Naive thymus-derived CD8-positive, alpha-beta T cell (primary cell): ENCODE measurements at regions of chr17 and their contacts with region 1.

Region 1: DNA sequence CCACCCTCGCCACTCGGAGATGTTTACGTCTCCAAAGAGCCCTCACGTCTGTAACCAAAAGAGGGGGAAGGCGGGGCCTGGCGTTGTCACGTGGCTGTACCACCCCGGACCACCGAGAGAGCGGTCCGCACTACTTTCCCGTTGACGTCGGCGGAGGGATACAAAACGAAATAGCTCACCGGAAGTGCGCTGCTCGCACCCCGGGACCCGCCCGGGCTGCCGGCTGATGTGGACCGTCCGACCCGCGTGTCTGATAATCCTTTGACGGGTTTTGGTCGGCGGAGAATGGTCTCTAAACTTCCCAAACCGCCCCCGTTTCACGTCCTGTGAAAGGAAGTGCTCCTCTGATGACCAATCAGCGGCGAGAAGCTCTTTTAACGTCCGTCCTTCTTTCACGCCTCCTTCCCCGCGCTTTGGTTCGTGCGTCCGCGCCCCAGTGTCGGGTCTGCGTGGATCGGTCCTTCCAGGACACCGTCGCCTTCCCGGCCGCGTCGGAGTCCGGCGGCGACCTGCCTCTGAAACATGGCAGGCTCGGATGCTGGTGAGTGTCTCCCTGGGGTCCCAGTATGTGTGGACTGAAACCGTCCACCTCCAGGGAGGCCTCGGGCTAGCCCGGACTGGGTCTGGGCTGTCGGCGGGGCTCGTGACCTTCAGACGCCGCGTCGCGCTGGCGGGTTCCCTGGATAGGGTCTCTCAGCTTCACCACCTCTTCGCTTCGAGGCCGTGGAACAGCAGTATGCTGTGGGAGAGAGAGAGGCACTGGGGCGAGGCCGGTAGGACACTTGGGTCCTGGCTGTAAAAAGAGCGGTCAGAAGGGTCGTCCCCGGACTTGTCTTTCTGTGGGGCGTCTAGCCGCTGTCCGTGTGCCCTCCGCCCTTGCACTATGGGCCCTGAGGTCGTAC is at the start of gene CEP95:
- DNase-seq: peak; percentile 88 to 99 (median 96)
- ATAC-seq: peak; percentile 60 to 70
- H3K4me3 Mint-ChIP-seq: peak within 1 kb of the TSS; percentile 98 to 100 (median 100)
- H3K27ac Mint-ChIP-seq: peak within 1 kb of the TSS; percentile 99 to 100 (median 100)
- H3K4me1 Mint-ChIP-seq: peaks cover 30 to 81% (median 57%) of the 10 kb centered on the region in 4 donors
- H3K27me3 Mint-ChIP-seq: peaks cover 0 to 6% (median 0%) of the 10 kb centered on the region in 5 donors
- polyA plus RNA-seq, gene CEP95: 8.6 to 20.1 (median 9.0) TPM

Region 2: GRCh38 chr17:63773381-63774140 is 733.3 kb before region 1 on chr17 and contains the start of gene CCDC47:
- POLR2A ChIA-PET with region 1: interaction called, 16 read pairs
- DNase-seq: peak; percentile 94 to 99 (median 98)
- ATAC-seq: peak; percentile 86 to 88
- H3K4me3 Mint-ChIP-seq: peak within 1 kb of the TSS; percentile 87 to 99 (median 96)
- H3K27ac Mint-ChIP-seq: peak within 1 kb of the TSS; percentile 91 to 100 (median 99)
- H3K4me1 Mint-ChIP-seq: peaks cover 30 to 80% (median 70%) of the 10 kb centered on the region in 4 donors
- H3K27me3 Mint-ChIP-seq: no peaks in the 10 kb centered on the region
- polyA plus RNA-seq, gene CCDC47: 21.8 to 34.8 (median 26.0) TPM

Region 3: GRCh38 chr17:64355536-64356303 is 151.1 kb before region 1 on chr17:
- POLR2A ChIA-PET with region 1: no interaction called
- DNase-seq: no peak
- ATAC-seq: no peak
- H3K4me3 Mint-ChIP-seq: peak overlapping the region in 2 of 10 donors; percentile 9 to 15
- H3K27ac Mint-ChIP-seq: peak overlapping the region; percentile 70 to 94 (median 87)
- H3K4me1 Mint-ChIP-seq: peaks cover 18 to 40% (median 28%) of the 10 kb centered on the region in 4 donors
- H3K27me3 Mint-ChIP-seq: no peaks in the 10 kb centered on the region

Region 4: GRCh38 chr17:64388961-64389565 is 117.8 kb before region 1 on chr17:
- POLR2A ChIA-PET with region 1: interaction called, 115 read pairs
- DNase-seq: peak in 3 of 10 donors; percentile 24 to 61 (median 52)
- ATAC-seq: peak; percentile 30 to 32
- H3K4me3 Mint-ChIP-seq: peak overlapping the region; percentile 9 to 84 (median 74)
- H3K27ac Mint-ChIP-seq: peak overlapping the region; percentile 66 to 100 (median 96)
- H3K4me1 Mint-ChIP-seq: peaks cover 53 to 95% (median 93%) of the 10 kb centered on the region in 4 donors
- H3K27me3 Mint-ChIP-seq: no peaks in the 10 kb centered on the region

Region 5: GRCh38 chr17:64411999-64412771 is 94.6 kb before region 1 on chr17:
- POLR2A ChIA-PET with region 1: interaction called, 59 read pairs
- DNase-seq: peak in 2 of 10 donors; percentile 31 to 68
- ATAC-seq: peak; percentile 54 to 76
- H3K4me3 Mint-ChIP-seq: peak overlapping the region; percentile 63 to 88 (median 80)
- H3K27ac Mint-ChIP-seq: peak overlapping the region; percentile 53 to 91 (median 76)
- H3K4me1 Mint-ChIP-seq: peaks cover 21 to 40% (median 32%) of the 10 kb centered on the region in 4 donors
- H3K27me3 Mint-ChIP-seq: no peaks in the 10 kb centered on the region

Region 6: DNA sequence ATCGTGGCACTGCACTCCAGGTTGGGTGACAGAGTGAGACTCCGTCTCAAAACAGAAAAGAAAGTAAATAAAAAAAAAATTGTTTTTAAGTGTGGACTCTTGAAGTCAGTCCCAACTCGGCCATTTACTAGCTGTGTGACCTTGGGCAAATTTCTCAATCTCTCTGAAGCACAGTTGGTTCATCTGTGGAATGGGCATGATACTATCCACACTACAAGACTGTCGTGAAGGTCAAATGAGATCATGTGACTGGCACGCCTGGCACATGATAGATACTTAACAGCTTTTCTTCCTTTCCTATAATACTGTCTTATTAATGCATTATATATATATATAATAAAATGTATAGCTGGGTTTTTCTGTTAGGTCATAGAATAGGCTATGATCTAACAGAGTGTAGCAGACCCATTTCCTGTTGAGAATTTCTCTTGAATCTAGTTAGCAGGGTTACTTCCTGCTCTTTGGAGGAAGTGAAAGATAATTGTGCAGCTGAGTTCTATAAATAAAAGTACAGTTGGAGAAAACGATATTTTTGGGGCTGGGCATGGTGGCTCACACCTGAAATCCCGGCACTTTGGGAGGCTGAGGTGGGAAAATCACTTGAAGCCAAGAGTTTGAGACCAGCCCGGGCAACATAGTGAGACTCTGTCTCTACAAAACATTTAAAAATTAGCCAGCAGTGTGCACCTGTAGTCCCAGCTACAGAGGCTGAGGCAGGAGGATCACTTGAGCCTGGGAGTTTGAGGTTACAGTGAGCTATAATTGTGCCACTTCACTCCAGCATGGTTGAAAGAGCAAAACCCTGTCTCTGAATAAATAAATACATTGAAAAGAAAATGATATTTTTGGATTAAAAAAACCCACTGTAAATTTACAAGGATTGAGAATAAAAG is 50.6 kb before region 1 on chr17:
- POLR2A ChIA-PET with region 1: interaction called, 23 read pairs
- DNase-seq: peak in 3 of 10 donors; percentile 20 to 39 (median 32)
- ATAC-seq: peak; percentile 67 to 79
- H3K4me3 Mint-ChIP-seq: peak overlapping the region; percentile 38 to 76 (median 64)
- H3K27ac Mint-ChIP-seq: peak overlapping the region; percentile 86 to 96 (median 90)
- H3K4me1 Mint-ChIP-seq: peaks cover 8 to 41% (median 18%) of the 10 kb centered on the region in 4 donors
- H3K27me3 Mint-ChIP-seq: peaks cover 0 to 3% (median 0%) of the 10 kb centered on the region in 5 donors

Region 7: GRCh38 chr17:64470625-64471024 is 36.2 kb before region 1 on chr17:
- POLR2A ChIA-PET with region 1: no interaction called
- DNase-seq: no peak
- ATAC-seq: no peak
- H3K4me3 Mint-ChIP-seq: no peak overlapping the region
- H3K27ac Mint-ChIP-seq: peak overlapping the region in 1 of 10 donors; percentile 15
- H3K4me1 Mint-ChIP-seq: peaks cover 0 to 2% (median 0%) of the 10 kb centered on the region in 4 donors
- H3K27me3 Mint-ChIP-seq: no peaks in the 10 kb centered on the region

Region 8: DNA sequence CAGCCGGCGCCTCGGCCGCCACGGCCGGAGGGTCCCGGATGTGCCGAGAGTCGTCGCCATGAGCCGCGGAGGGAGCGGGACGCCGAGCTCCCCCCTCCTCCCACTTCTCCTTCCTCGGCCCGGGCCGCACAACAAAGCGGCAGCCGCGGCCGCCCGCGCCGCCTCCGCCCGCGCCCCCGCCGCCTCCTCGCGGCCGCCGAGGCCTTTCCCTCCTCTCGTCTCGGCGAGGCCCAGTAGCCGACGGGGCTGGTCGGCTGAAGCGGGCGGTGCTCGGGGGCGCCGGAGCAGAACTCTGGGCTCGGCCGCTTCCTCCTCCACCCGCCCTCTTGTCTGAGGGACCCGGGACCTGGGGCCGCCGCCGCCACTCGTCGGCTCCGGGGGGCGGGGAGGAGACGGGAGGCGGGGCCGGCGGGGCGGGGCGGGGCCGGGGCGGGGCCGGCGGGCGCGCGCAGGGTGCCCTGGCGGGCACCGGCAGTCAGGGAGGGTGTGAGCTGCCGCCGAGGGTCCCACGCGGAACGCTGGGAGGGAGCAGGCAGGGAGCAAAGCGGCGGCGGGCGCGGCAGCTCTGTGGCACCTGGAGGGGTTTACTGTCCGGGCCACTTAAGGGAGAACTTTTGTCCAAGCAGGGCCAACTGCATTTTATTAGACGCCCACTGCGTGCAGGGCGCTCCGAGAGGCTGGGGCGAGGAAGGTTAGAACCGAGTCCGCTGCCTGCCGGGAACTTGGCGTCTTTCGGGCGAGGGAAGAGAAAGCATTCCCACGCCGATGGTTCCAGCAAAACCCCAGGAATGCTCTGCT is 155.3 kb after region 1 on chr17 and contains the start of gene SMURF2:
- POLR2A ChIA-PET with region 1: interaction called, 23 read pairs
- DNase-seq: peak; percentile 71 to 90 (median 83)
- ATAC-seq: peak; percentile 82 to 83
- H3K4me3 Mint-ChIP-seq: peak within 1 kb of the TSS; percentile 96 to 99 (median 98)
- H3K27ac Mint-ChIP-seq: peak within 1 kb of the TSS; percentile 89 to 98 (median 96)
- H3K4me1 Mint-ChIP-seq: peaks cover 12 to 45% (median 33%) of the 10 kb centered on the region in 4 donors
- H3K27me3 Mint-ChIP-seq: no peaks in the 10 kb centered on the region
- polyA plus RNA-seq, gene SMURF2: 6.1 to 11.0 (median 8.0) TPM